ENCODE measurements at regions of chr9 and their contacts with region 1.

Region 1: GRCh38 chr9:69672596-69673310 is 582 bp upstream of the APBA1 start:
- DNase-seq: peak; percentile 81
- CTCF ChIP-seq: peak; percentile 92

Region 2: GRCh38 chr9:69660304-69660703 is 12.4 kb before region 1 on chr9:
- CTCF ChIA-PET with region 1: interaction called, 14 read pairs
- POLR2A ChIA-PET with region 1: no interaction called
- DNase-seq: no peak
- CTCF ChIP-seq: no peak

Measured in GM10248 (cell line).